Right ventricle myocardium inferior (tissue), 1 donor: ENCODE measurements at regions of chr12 and their contacts with region 1.

Region 1: GRCh38 chr12:116210131-116210530 is 67.4 kb downstream of the MED13L start:
- DNase-seq: no peak
- ATAC-seq: no peak

Region 2: GRCh38 chr12:116164250-116165035 is 45.7 kb before region 1 on chr12:
- intact Hi-C with region 1: loop called (anchors 5 kb)
- DNase-seq: no peak
- ATAC-seq: peak; percentile 46